CD8-positive, alpha-beta T cell (primary cell): ENCODE measurements at regions of chr6 and their contacts with region 1.

Region 1: DNA sequence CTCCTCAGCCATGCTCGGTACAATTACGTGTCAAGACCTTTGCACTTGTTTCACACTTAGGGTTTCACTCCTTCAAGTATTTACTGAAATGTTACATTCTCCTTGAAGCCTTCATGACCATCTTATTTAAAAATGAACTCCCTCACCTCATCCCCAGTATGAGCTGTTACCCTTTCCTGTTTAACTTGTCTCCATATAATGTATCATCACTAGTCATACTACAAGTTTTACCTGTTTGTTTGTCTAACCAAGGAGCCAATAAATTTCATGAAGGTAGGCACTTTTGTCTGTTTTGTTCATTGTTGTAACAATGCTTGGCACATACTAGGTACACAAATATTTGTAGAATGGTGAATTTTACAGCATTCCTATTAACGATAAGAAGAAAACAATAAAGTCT is 46.1 kb upstream of the MTRF1L start:
- DNase-seq: no peak
- ATAC-seq: no peak
- H3K4me3 ChIP-seq: no peak overlapping the region
- H3K4me3 Mint-ChIP-seq: no peak overlapping the region
- H3K27ac ChIP-seq: no peak overlapping the region
- H3K27ac Mint-ChIP-seq: no peak overlapping the region
- H3K4me1 ChIP-seq: no peaks in the 10 kb centered on the region
- H3K4me1 Mint-ChIP-seq: no peaks in the 10 kb centered on the region
- H3K27me3 ChIP-seq: no peaks in the 10 kb centered on the region
- H3K27me3 Mint-ChIP-seq: peaks cover 2% of the 10 kb centered on the region
- CTCF ChIP-seq: no peak

Region 2: GRCh38 chr6:152499931-152500330 is 548.7 kb before region 1 on chr6:
- CTCF ChIA-PET with region 1: no interaction called
- POLR2A ChIA-PET with region 1: no interaction called
- intact Hi-C with region 1: loop called in 1 of 2 experiments (anchors 5 kb)
- DNase-seq: no peak
- ATAC-seq: no peak
- H3K4me3 ChIP-seq: no peak overlapping the region
- H3K4me3 Mint-ChIP-seq: no peak overlapping the region
- H3K27ac ChIP-seq: no peak overlapping the region
- H3K27ac Mint-ChIP-seq: no peak overlapping the region
- H3K4me1 ChIP-seq: no peaks in the 10 kb centered on the region
- H3K4me1 Mint-ChIP-seq: no peaks in the 10 kb centered on the region
- H3K27me3 ChIP-seq: no peaks in the 10 kb centered on the region
- H3K27me3 Mint-ChIP-seq: no peaks in the 10 kb centered on the region
- CTCF ChIP-seq: no peak

Region 3: GRCh38 chr6:153032255-153032882 is 16.3 kb before region 1 on chr6:
- CTCF ChIA-PET with region 1: no interaction called
- POLR2A ChIA-PET with region 1: no interaction called
- intact Hi-C with region 1: no loop called
- DNase-seq: peak in 2 of 9 experiments; percentile 15 to 24
- ATAC-seq: no peak
- H3K4me3 ChIP-seq: no peak overlapping the region
- H3K4me3 Mint-ChIP-seq: no peak overlapping the region
- H3K27ac ChIP-seq: no peak overlapping the region
- H3K27ac Mint-ChIP-seq: no peak overlapping the region
- H3K4me1 ChIP-seq: no peaks in the 10 kb centered on the region
- H3K4me1 Mint-ChIP-seq: no peaks in the 10 kb centered on the region
- H3K27me3 ChIP-seq: no peaks in the 10 kb centered on the region
- H3K27me3 Mint-ChIP-seq: peaks cover 8% of the 10 kb centered on the region
- CTCF ChIP-seq: no peak